Transverse colon (tissue), 4 donors: ENCODE measurements at regions of chr2 and their contacts with region 1.

Region 1: DNA sequence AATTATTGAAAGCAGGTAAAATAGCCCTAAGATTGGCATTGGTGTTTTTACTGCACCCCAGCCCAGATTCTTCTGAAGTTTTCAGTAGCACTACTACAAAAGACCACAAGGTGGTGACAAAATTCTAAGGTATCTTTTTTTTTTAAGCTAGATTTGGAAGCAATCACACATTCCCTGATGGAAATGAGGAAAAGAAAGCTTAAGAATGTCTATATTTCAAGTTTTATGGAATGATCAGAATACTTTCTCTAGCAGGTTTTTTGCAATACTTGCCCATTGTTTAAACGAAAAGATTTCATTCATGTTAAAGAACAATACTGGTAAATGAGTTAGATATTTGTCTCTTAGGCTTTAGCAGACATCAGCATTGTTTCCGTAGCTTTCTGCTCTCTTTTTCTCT is 32.1 kb upstream of the ZNF638 start:
- DNase-seq: no peak
- H3K4me3 ChIP-seq: no peak overlapping the region
- H3K27ac ChIP-seq: no peak overlapping the region
- H3K4me1 ChIP-seq: no peaks in the 10 kb centered on the region
- H3K27me3 ChIP-seq: no peaks in the 10 kb centered on the region
- CTCF ChIP-seq: peak; percentile 62 to 77 (median 75)
- EP300 ChIP-seq: no peak
- POLR2A ChIP-seq: no peak

Region 2: DNA sequence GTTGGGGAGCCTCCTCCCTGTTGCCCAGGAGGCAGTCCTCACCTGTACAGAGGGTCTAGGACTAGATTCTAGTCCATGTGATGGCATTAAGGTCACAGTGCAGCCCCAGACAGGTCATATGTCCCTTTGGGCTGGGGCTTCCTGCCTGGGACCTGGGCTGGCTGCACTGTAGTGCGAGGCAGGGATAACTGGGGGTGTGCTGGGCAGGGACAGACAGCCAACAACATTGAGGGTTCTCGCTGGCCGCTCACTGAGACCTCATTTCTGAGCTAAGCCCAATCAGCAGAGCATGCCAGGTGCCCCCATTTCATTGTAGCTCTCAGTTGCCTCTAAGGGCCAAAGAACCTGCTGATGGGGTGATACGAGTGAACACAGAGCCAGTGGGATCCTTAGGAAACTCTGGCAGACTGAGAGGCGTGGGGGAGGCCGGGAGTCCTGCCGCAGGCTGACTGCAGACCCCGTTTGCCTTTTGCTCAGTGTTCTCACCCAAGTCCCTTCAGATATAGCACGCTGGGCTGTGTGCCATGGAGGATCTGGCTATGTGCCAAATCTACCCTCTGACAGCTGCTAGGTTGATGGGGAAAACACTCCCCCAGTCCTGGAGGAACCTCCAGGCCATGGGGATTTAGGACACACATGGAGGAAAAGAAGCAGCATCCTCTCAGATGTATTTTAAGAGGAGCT is 205.7 kb after region 1 on chr2:
- in situ Hi-C with region 1: loop called (anchors 5 to 10 kb)
- intact Hi-C with region 1: loop called (anchors 1 kb)
- DNase-seq: no peak
- H3K4me3 ChIP-seq: no peak overlapping the region
- H3K27ac ChIP-seq: no peak overlapping the region
- H3K4me1 ChIP-seq: no peaks in the 10 kb centered on the region
- H3K27me3 ChIP-seq: no peaks in the 10 kb centered on the region
- CTCF ChIP-seq: no peak
- EP300 ChIP-seq: no peak
- POLR2A ChIP-seq: no peak

Region 3: GRCh38 chr2:71510196-71510807 is 210.8 kb after region 1 on chr2:
- in situ Hi-C with region 1: loop called (anchors 5 to 10 kb)
- intact Hi-C with region 1: loop called (anchors 1 kb)
- DNase-seq: peak; percentile 70
- H3K4me3 ChIP-seq: no peak overlapping the region
- H3K27ac ChIP-seq: no peak overlapping the region
- H3K4me1 ChIP-seq: no peaks in the 10 kb centered on the region
- H3K27me3 ChIP-seq: no peaks in the 10 kb centered on the region
- CTCF ChIP-seq: peak; percentile 86 to 93 (median 91)
- EP300 ChIP-seq: no peak
- POLR2A ChIP-seq: no peak